ENCODE measurements at regions of chr1 and their contacts with region 1.

Region 1: DNA sequence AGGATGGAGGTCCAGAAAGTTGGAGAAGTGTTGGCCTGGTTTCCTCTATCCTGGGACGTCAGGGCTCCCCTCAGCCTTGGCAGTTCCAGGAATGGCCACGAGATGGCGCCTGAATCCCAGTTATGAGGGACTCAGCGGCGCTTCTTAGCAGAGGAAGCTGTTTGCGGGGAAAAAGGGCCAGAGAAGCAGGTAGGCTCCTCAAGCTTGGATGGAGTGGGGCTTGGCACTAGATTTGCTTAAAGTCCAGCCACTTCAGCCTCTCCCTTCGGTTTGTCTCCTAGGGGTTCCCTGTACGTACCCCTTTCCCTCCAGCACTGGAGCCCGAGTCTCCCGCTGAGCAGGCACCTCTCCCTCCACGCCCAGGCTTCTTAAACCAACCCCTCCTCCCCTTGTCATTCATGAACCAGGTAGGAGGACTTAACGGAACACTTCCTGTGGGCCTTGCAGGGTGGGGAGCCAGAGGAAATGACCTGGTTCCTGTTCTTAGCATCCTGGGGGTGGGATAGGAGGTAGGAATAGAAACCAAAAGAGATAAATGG is 32.0 kb upstream of the TENT5B start:
- ATAC-seq: peak; percentile 76 to 95 (median 88)
- H3K4me3 ChIP-seq: no peak overlapping the region
- H3K27ac ChIP-seq: no peak overlapping the region
- H3K4me1 ChIP-seq: peaks cover 4 to 17% of the 10 kb centered on the region in 2 donors

Region 2: GRCh38 chr1:27097484-27097917 is 52.8 kb after region 1 on chr1:
- in situ Hi-C with region 1: loop called in 6 of 9 experiments (anchors 10 kb)
- ATAC-seq: peak in 7 of 8 experiments; percentile 6 to 71 (median 18)
- H3K4me3 ChIP-seq: no peak overlapping the region
- H3K27ac ChIP-seq: no peak overlapping the region
- H3K4me1 ChIP-seq: peaks cover 27 to 29% of the 10 kb centered on the region in 2 donors

Region 3: GRCh38 chr1:27656157-27656893 is 611.6 kb after region 1 on chr1:
- in situ Hi-C with region 1: no loop called
- ATAC-seq: peak in 2 of 8 experiments; percentile 9 to 13
- H3K4me3 ChIP-seq: no peak overlapping the region
- H3K27ac ChIP-seq: peak overlapping the region in 1 of 2 donors; percentile 62
- H3K4me1 ChIP-seq: peaks cover 15 to 21% of the 10 kb centered on the region in 2 donors